Psoas muscle (tissue), 8 donors: ENCODE measurements at regions of chr18 and their contacts with region 1.

Region 1: DNA sequence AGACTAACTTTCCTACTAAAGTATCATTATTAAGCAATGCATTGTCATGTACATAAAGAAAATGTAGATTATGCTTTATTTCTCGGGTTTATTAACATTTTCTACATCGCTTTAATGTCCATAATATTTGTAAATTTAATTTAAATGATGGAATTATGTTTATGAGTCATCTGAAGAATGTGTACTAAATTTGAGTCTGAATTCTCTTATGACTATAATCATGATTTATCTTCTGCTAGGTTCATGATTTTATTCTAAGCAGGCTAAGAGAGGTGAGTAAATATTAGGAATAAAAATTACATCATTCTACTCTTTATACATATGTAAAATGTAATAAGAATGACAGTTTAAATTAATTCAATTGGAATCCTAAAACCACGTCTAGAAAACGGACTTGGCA is 206.3 kb upstream of the NOL4 start:
- DNase-seq: no peak
- ATAC-seq: no peak
- H3K4me3 ChIP-seq: no peak overlapping the region
- H3K27ac ChIP-seq: no peak overlapping the region
- H3K4me1 ChIP-seq: no peaks in the 10 kb centered on the region
- H3K27me3 ChIP-seq: no peaks in the 10 kb centered on the region
- CTCF ChIP-seq: no peak

Region 2: GRCh38 chr18:34370704-34371405 is 60.2 kb before region 1 on chr18:
- intact Hi-C with region 1: loop called in 1 of 2 experiments (anchors 10 kb)
- DNase-seq: no peak
- ATAC-seq: no peak
- H3K4me3 ChIP-seq: no peak overlapping the region
- H3K27ac ChIP-seq: no peak overlapping the region
- H3K4me1 ChIP-seq: no peaks in the 10 kb centered on the region
- H3K27me3 ChIP-seq: no peaks in the 10 kb centered on the region
- CTCF ChIP-seq: no peak

Region 3: GRCh38 chr18:34483198-34483597 is 52.2 kb after region 1 on chr18:
- intact Hi-C with region 1: loop called in 1 of 2 experiments (anchors 5 kb)
- DNase-seq: no peak
- ATAC-seq: no peak
- H3K4me3 ChIP-seq: no peak overlapping the region
- H3K27ac ChIP-seq: no peak overlapping the region
- H3K4me1 ChIP-seq: no peaks in the 10 kb centered on the region
- H3K27me3 ChIP-seq: no peaks in the 10 kb centered on the region
- CTCF ChIP-seq: no peak